Lower leg skin (tissue), 4 donors: ENCODE measurements at regions of chr22 and their contacts with region 1.

Region 1: DNA sequence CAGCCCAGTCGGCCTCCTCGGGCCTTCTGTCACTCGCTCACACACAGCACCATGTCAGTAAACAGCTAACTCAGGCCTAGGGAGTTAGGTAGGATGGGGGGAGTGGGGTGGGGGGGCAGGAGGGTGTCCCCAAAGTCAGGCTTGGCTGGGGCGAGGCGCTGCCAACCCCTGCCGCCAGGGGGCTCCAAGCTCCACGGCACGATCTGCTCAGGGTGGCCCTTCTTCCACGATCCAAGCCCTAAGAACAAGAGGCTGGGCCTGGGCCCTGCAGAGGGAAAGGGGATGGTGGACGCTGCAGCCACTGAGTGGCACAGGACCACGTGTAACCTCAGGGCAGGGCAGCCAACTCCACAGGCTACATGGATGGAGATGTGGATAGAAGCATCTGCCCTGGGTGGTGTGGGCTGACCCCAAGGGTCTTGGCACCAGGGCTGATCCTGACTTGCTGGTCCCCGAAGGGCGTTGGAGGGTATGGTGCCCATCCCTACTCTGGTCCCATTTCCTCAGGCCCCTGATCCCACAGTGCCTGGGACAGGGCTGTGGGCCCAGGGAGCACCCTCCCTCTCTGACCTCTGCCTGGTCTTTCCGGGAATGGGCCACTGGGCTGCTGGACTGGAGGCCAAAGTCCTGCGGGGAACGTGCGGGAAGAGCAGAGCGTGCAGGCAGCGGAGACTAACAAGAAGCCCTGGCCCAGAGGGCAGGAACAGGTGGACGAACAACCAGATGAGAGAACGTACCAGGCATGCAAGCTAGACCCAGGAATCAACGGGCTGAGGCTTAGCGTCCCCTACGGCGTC is 29.1 kb upstream of the TXNRD2 start:
- DNase-seq: peak; percentile 42 to 94
- H3K4me3 ChIP-seq: no peak overlapping the region
- CTCF ChIP-seq: no peak
- POLR2A ChIP-seq: no peak

Region 2: DNA sequence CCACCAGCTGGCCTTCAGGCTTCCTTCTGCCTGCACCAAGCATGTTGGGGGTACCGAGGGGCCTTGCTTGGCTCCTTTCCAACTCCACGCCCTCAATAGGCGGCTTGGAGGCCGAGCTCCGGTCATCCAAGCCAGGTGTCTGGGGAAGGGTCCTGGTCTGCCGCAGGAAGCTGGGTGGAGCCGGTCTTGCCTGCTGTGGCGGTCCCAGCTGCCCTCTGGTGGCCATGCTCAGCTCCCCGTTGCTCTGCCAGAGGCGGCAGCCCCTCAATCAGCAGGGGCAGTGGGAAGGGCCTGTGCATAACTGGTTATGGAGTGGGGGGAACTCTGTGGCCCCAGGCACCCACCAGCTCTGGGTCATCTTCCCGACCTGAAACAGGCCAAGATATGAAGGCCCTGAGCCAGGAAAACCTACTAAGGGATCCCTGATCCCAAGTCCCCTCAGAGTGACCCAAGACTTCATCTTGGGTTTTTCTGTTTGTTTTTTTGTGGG is 42.8 kb after region 1 on chr22:
- intact Hi-C with region 1: loop called (anchors 5 kb)
- DNase-seq: no peak
- H3K4me3 ChIP-seq: no peak overlapping the region
- CTCF ChIP-seq: no peak
- POLR2A ChIP-seq: no peak

Region 3: DNA sequence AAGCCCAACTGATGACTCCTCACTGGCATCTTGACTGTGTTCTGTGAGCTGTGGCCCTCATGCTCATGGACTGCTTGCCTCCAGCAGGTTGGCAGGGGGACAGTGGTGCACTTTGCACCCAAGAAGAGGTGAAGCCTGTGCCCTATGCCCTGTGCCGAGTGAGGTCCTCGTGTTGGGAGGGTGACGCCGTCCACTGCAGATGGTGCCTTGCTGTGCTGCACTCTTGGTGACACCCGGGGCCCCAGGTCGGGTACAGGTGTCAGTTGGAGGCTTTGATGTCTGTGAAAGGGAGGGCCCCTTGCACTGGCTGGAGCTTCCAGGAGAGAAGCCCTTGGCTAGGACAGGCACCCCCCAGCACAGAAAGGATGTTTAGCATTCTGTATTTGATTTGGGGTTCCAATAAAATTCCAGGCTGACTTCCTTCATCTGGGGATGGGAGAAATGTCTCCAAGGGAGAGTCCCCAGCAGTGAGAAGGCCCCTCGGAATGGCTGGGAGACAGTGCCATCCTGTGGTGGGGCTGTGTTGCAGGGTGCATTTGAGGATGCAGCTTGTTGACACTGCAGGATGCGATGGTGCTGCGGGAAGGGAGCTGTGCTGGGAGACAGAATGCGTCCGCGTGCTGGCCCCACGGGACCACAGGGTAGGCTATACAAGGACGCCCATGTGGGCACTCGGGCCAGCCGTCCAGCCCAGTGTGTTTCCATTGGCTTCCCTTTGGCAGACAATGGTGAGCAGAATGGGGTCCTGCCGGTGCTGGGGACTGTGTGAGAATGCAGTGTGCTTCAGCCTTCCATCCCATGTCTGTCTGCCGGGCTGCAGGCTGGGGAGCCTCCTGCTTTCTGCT is 158.4 kb after region 1 on chr22:
- intact Hi-C with region 1: loop called (anchors 5 kb)
- DNase-seq: no peak
- H3K4me3 ChIP-seq: no peak overlapping the region
- CTCF ChIP-seq: no peak
- POLR2A ChIP-seq: no peak